Psoas muscle (tissue), 8 donors: ENCODE measurements at regions of chr11 and their contacts with region 1.

Region 1: DNA sequence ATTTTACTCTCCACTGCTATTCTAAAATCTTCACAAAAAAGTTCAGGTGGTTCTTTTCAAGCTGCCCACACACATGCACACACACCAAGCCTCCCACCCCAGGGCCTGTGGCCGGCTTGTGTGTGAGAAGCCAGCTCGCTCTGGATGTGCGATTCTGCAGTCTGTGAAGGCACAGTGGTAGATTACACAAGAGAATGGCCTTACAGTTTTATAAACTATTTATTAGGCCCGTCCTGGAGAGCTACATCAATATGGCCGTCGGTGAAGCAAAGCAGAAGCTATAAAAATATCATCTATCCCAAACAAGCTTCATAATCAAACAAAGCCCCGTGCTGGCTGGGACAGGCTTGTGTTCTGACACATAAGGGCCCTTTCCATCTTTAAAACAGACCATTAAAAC is 240.5 kb downstream of the OPCML start:
- DNase-seq: no peak
- ATAC-seq: no peak
- H3K4me3 ChIP-seq: no peak overlapping the region
- H3K27ac ChIP-seq: no peak overlapping the region
- H3K4me1 ChIP-seq: no peaks in the 10 kb centered on the region
- H3K27me3 ChIP-seq: no peaks in the 10 kb centered on the region
- CTCF ChIP-seq: no peak

Region 2: DNA sequence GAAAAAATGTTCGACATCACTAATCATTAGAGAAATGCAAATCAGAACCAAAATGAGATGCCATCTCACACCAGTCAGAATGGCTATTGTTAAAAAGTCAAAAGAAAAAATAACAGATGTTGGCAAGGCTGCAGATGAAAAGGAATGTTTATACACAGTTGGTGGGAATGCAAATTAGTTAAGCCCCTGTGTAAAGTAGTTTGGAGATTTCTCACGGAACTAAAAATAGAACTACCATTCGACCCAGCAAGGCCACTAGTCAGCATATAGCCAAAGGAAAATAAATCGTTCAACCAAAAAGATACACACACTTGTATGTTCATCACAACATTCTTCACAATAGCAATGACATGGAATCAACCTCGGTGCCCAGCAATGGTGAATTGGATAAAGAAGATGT is 262.7 kb before region 1 on chr11:
- intact Hi-C with region 1: no loop called
- DNase-seq: no peak
- ATAC-seq: no peak
- H3K4me3 ChIP-seq: no peak overlapping the region
- H3K27ac ChIP-seq: no peak overlapping the region
- H3K4me1 ChIP-seq: no peaks in the 10 kb centered on the region
- H3K27me3 ChIP-seq: no peaks in the 10 kb centered on the region
- CTCF ChIP-seq: no peak

Region 3: GRCh38 chr11:133230431-133230830 is 61.3 kb before region 1 on chr11:
- intact Hi-C with region 1: loop called in 1 of 2 experiments (anchors 10 kb)
- DNase-seq: no peak
- ATAC-seq: no peak
- H3K4me3 ChIP-seq: no peak overlapping the region
- H3K27ac ChIP-seq: no peak overlapping the region
- H3K4me1 ChIP-seq: peaks cover 6% of the 10 kb centered on the region
- H3K27me3 ChIP-seq: peaks cover 0 to 2% (median 0%) of the 10 kb centered on the region in 3 donors
- CTCF ChIP-seq: no peak